OCI-LY7 (cell line): ENCODE measurements at regions of chr19 and their contacts with region 1.

Region 1: GRCh38 chr19:11203194-11204075 is 6.1 kb upstream of the KANK2 start:
- DNase-seq: peak; percentile 58
- H3K4me3 ChIP-seq: no peak overlapping the region
- H3K27ac ChIP-seq: no peak overlapping the region
- H3K4me1 ChIP-seq: peaks cover 51% of the 10 kb centered on the region
- CTCF ChIP-seq: peak; percentile 83

Region 2: DNA sequence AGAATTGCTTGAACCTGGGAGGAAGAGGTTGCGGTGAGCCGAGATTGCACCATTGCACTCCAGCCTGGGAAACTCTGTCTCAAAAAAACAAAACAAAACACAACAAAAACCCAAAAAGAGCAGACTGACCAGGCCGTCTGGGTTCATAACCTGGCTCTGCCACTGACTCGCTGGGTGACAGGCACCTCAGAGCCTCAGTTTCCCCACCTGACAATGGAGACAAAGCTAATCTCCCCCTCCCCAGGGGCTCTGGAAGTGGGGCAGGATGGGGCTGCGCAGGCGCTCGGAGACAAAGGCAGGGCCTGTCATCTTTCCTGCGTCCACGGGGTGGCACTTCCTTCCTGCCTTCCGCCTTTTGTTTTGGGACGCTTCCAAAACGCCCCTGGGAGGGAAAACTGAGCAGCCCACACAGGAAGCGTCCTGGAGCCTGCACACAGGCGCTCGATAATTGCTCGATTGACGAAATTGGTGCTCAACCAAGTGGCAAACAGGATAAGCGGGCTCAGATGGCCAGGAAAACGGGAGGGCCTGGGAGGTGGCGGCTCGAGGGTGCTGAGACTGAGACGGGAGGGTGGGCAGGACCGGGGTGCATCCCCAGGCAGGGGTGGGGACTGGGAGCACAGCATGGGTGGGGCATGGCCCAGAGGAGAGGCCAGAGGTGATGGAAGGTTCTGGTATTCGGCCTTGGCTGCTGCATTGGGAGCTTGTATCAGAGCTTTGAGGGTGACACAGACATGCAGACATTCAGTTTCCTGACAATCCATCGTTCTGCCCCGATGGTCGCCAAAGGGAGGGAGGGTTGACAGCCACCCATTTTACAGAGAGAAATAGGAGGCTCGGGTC is 65.7 kb before region 1 on chr19:
- CTCF ChIA-PET with region 1: no interaction called
- POLR2A ChIA-PET with region 1: no interaction called
- intact Hi-C with region 1: loop called (anchors 1 kb)
- DNase-seq: peak; percentile 57
- H3K4me3 ChIP-seq: no peak overlapping the region
- H3K27ac ChIP-seq: no peak overlapping the region
- H3K4me1 ChIP-seq: peaks cover 25% of the 10 kb centered on the region
- CTCF ChIP-seq: peak; percentile 79

Region 3: DNA sequence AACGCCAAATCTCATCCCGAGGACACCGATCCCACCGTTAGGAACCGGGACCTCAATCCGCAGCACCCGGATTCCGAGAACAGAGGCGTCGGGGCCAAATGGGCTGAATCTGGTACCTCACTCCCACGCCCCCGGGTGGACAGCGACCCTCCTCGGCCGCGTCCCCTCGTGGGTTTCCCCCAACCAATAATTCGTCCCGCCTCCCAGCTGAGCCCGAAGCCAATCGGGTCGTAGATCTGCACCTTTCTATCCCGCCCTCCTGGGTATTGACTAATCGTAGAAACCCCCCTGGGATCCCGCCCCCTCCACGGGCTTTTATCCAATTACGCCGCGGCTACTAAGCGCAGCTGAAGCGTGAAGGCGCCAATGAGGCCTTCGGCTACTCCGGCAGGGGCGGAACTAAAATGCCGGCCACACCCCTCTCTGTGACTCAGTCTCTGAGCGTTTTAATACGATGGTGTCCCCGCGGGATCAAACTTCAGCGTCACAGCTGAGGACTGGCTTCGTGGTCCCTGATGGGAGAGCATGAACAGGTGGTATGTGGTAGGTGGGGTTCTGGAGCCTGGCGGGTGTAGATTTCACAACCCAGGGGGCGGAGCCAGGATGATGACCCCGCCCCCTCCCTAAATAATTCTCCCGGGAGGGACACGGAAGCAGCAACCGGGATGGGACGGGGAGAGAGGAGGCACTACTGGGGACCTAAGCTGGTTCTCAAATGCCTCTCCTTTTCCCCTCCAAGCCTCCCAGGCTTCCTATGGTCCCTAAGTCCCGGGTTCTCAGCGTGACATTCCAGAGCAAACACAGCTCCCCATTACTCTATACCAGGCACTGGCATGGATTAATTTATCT is 142.9 kb after region 1 on chr19 and contains the starts of genes CCDC159 and TMEM205:
- CTCF ChIA-PET with region 1: no interaction called
- POLR2A ChIA-PET with region 1: no interaction called
- intact Hi-C with region 1: no loop called
- DNase-seq: peak; percentile 100
- H3K4me3 ChIP-seq: peak within 1 kb of the TSS; percentile 88
- H3K27ac ChIP-seq: peak within 1 kb of the TSS; percentile 55
- H3K4me1 ChIP-seq: peaks cover 26% of the 10 kb centered on the region
- CTCF ChIP-seq: peak; percentile 61
- total RNA-seq, gene CCDC159: 13.3 and 14.1 TPM in 2 replicates
- total RNA-seq, gene TMEM205: 58.4 and 58.9 TPM in 2 replicates